ENCODE measurements at regions of chr1 and their contacts with region 1.

Region 1: DNA sequence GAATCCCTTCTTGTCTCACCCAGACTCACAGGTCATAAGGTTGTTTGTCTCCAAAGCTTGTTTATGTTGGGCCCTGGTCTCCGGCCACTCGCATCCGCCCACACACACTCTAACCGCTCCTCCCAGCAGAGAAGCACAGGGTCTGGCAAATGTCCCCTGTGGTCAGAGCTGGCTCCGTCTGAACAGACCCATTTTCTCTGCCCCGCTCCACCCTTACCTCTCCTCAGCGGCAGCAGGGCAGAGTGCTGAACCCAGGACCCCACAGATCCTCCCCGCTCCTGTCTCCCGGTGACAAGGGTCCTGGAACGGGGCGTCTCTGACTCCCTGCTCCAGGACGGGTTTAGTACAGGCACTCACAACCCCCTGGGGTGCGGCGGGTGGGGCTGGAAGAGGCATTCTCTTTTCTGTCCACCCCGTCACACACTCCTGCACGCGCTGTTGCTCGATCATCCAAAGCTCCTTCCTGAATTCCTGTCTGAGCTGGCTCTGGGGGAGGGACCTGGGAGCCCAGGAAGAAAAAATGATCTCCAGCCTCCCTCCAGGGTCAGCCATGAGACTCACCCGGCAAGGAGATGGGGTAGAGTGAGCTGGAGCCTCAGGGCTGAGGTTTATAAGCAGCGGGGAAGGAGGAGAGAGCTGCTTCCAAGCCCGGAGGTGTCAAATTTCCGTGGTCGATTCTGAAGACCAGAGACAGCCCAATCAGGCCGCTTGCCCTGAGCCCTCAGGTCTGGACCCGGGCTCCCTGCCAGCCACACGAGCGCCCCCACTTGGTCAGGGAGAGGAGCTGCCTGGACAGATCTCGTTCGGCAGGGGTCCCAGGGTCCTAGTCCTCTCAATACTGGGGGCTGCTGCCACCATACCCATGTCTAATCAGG is at the start of gene S100A13:
- DNase-seq: peak; percentile 78 to 91 (median 86)
- ATAC-seq: peak; percentile 81 to 87 (median 85)
- H3K4me3 ChIP-seq: peak within 1 kb of the TSS; percentile 14 to 58 (median 31)
- H3K27ac ChIP-seq: peak within 1 kb of the TSS; percentile 44 to 85 (median 80)
- H3K4me1 ChIP-seq: peaks cover 0 to 9% (median 0%) of the 10 kb centered on the region in 3 donors
- H3K27me3 ChIP-seq: no peaks in the 10 kb centered on the region
- CTCF ChIP-seq: peak; percentile 21 to 44 (median 38)
- total RNA-seq, gene S100A13: 22.0 to 47.3 (median 30.5) TPM

Region 2: DNA sequence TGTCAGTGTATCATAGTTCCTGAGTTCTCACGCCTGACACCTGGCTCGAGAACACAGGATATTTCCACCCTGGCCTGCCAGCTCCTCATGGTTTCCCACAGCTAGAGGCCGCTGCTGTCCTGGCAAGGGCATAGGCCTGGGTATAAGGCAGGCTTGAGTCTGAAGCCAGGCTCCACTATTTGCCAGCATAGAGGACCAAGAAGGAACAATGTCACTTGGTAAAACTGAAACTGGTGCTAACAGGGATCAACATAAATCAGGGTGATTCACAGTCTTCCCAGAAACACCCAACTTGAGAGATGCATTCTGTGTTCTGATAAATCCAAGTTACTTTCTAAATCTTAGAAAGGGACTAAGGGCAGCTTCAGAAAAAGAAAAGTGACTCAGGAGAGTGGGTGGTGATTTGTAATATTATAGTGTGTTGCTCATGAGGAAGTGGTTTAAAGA is 54.6 kb before region 1 on chr1:
- intact Hi-C with region 1: loop called in 1 of 3 experiments (anchors 10 kb)
- DNase-seq: peak; percentile 80 to 92 (median 84)
- ATAC-seq: peak; percentile 90 to 94 (median 92)
- H3K4me3 ChIP-seq: no peak overlapping the region
- H3K27ac ChIP-seq: peak overlapping the region in 2 of 4 donors; percentile 50 to 51
- H3K4me1 ChIP-seq: peaks cover 0 to 9% (median 0%) of the 10 kb centered on the region in 3 donors
- H3K27me3 ChIP-seq: no peaks in the 10 kb centered on the region
- CTCF ChIP-seq: peak; percentile 69 to 88 (median 77)